Ovary (tissue), 10 donors: ENCODE measurements at regions of chr6 and their contacts with region 1.

Region 1: GRCh38 chr6:75208298-75209183 is 2.7 kb upstream of the COL12A1 start:
- DNase-seq: peak; percentile 82 to 91 (median 91)
- H3K4me3 ChIP-seq: no peak overlapping the region
- H3K27ac ChIP-seq: no peak overlapping the region
- H3K4me1 ChIP-seq: peaks cover 1% of the 10 kb centered on the region
- H3K27me3 ChIP-seq: no peaks in the 10 kb centered on the region
- CTCF ChIP-seq: peak; percentile 78 to 89 (median 83)
- EP300 ChIP-seq: no peak
- POLR2A ChIP-seq: no peak

Region 2: GRCh38 chr6:73732845-73733675 is 1475.5 kb before region 1 on chr6:
- intact Hi-C with region 1: loop called in 3 of 4 experiments (anchors 2 to 10 kb)
- DNase-seq: peak; percentile 11 to 56 (median 46)
- H3K4me3 ChIP-seq: no peak overlapping the region
- H3K27ac ChIP-seq: no peak overlapping the region
- H3K4me1 ChIP-seq: no peaks in the 10 kb centered on the region
- H3K27me3 ChIP-seq: no peaks in the 10 kb centered on the region
- CTCF ChIP-seq: peak; percentile 14 to 45 (median 29)
- EP300 ChIP-seq: no peak
- POLR2A ChIP-seq: no peak

Region 3: DNA sequence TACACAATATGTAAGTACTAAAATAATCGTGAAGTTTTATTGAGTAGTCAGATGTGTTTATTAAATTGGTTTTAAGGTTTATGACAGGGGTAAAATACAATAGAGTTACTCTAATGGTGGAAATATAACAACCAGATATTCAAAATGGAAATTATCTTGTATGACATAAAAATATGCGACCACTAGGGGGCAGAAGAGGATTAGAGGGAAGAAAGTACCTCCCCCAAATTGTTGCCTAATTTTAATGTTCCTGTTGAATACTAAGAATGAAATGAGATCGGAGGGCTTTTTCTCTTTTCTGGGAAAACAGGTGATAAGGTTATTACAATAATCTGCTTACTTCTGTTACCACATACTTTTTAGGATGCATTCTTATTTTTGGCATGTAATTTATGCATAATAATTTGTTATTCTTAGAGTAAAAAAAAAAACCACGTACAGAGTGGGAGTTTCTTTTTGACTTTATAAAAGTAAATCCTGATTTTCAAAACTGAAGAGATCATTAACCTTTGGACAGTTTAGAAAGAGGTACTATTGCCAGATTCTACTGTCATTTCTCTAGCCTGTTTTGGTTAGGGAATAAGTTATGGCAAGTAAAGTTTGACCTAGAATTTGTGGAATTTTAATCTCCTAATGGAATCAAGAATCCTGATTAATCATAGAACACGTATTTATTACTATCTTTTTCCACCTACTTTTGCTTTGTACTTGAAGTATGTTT is 1353.4 kb before region 1 on chr6:
- intact Hi-C with region 1: loop called (anchors 2 to 10 kb)
- DNase-seq: no peak
- H3K4me3 ChIP-seq: no peak overlapping the region
- H3K27ac ChIP-seq: no peak overlapping the region
- H3K4me1 ChIP-seq: no peaks in the 10 kb centered on the region
- H3K27me3 ChIP-seq: no peaks in the 10 kb centered on the region
- CTCF ChIP-seq: peak; percentile 54 to 64 (median 55)
- EP300 ChIP-seq: no peak
- POLR2A ChIP-seq: no peak

Region 4: GRCh38 chr6:74075323-74075722 is 1133.2 kb before region 1 on chr6:
- intact Hi-C with region 1: loop called in 1 of 4 experiments (anchors 5 kb)
- DNase-seq: no peak
- H3K4me3 ChIP-seq: no peak overlapping the region
- H3K27ac ChIP-seq: no peak overlapping the region
- H3K4me1 ChIP-seq: no peaks in the 10 kb centered on the region
- H3K27me3 ChIP-seq: no peaks in the 10 kb centered on the region
- CTCF ChIP-seq: no peak
- EP300 ChIP-seq: no peak
- POLR2A ChIP-seq: no peak

Region 5: DNA sequence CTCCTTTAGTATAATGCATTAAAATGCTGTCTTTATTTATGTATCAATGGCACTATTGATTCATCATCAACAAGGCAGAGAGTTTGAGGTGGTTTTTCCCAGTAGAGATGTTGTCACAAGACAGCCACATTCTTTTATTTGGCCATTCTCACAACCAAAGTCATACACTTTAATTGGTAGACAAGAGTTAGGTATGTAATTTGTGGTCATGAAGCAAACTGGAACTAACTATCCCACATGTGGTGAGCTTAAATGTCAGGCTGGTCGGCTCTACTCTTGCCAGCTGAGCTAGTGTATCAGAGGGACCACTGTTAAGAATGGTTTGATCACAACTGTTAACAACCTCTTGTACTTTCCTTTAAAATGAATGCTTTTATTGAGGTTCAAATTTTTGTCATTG is 797.9 kb before region 1 on chr6:
- intact Hi-C with region 1: loop called (anchors 5 kb)
- DNase-seq: no peak
- H3K4me3 ChIP-seq: no peak overlapping the region
- H3K27ac ChIP-seq: no peak overlapping the region
- H3K4me1 ChIP-seq: no peaks in the 10 kb centered on the region
- H3K27me3 ChIP-seq: no peaks in the 10 kb centered on the region
- CTCF ChIP-seq: no peak
- EP300 ChIP-seq: no peak
- POLR2A ChIP-seq: no peak

Region 6: DNA sequence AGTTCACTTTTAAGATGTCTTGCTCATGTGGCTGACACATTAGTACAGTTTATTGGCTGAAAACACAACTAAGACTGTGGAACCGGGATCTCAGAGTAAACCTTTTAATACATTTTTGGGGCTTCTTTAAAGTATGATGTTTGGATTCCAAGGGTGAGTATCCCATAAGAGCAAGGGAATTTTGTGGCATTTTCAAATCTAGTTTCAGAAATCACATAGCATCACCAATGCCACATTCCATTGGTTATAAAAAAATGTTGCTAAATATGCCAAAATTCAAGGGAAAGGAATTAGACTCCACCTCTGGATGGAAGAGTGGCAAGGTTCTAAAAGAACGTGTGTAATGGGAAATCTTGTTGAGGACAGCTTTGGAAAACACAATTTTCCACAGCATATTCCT is 341.2 kb before region 1 on chr6:
- intact Hi-C with region 1: loop called in 1 of 4 experiments (anchors 10 kb)
- DNase-seq: no peak
- H3K4me3 ChIP-seq: no peak overlapping the region
- H3K27ac ChIP-seq: no peak overlapping the region
- H3K4me1 ChIP-seq: peaks cover 9% of the 10 kb centered on the region
- H3K27me3 ChIP-seq: no peaks in the 10 kb centered on the region
- CTCF ChIP-seq: no peak
- EP300 ChIP-seq: no peak
- POLR2A ChIP-seq: no peak

Region 7: DNA sequence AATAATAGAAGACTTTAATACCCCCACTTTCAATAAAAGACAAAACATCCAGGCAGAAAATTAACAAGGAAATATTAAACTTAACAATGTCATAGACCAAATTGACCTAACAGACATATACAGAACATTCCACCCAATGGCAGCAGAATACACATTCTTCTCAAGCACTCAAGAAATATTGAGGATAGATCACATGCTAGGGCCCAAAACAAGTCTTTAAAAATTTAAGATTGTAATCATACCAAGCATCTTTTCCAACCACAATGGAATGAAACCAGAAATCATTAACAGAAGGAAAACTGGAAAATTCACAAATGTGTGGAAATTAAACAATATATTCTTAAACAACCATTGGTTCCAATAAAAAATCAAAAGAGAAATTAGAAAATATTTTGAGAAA is 163.7 kb before region 1 on chr6:
- intact Hi-C with region 1: no loop called
- DNase-seq: no peak
- H3K4me3 ChIP-seq: no peak overlapping the region
- H3K27ac ChIP-seq: no peak overlapping the region
- H3K4me1 ChIP-seq: no peaks in the 10 kb centered on the region
- H3K27me3 ChIP-seq: no peaks in the 10 kb centered on the region
- CTCF ChIP-seq: no peak
- EP300 ChIP-seq: no peak
- POLR2A ChIP-seq: no peak

Region 8: DNA sequence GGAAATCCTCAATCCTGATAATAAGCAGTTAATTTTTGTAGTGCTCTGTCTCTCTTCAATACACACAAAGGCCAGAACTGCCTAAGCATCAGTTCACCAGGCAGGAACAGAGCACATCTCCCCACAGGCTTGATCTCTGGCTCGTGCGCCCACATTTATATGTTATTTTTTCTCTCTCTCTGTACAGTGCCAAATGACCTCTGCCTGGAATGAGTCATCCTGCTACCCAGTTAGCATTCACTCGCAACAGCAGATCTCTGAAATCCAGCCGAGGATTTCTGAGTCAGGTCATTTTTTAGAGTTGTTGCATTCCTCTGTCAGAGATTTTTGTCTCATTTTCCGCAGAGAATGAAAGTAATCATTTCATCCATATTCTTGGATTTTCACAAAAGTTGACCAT is 109.8 kb before region 1 on chr6:
- intact Hi-C with region 1: loop called in 2 of 4 experiments (anchors 10 kb)
- DNase-seq: peak; percentile 71 to 86 (median 80)
- H3K4me3 ChIP-seq: no peak overlapping the region
- H3K27ac ChIP-seq: peak overlapping the region in 1 of 2 donors; percentile 70
- H3K4me1 ChIP-seq: peaks cover 11% of the 10 kb centered on the region
- H3K27me3 ChIP-seq: no peaks in the 10 kb centered on the region
- CTCF ChIP-seq: no peak
- EP300 ChIP-seq: no peak
- POLR2A ChIP-seq: no peak

Region 9: GRCh38 chr6:75147512-75147911 is 61.0 kb before region 1 on chr6:
- intact Hi-C with region 1: no loop called
- DNase-seq: no peak
- H3K4me3 ChIP-seq: no peak overlapping the region
- H3K27ac ChIP-seq: no peak overlapping the region
- H3K4me1 ChIP-seq: peaks cover 7% of the 10 kb centered on the region
- H3K27me3 ChIP-seq: no peaks in the 10 kb centered on the region
- CTCF ChIP-seq: no peak
- EP300 ChIP-seq: no peak
- POLR2A ChIP-seq: no peak

Region 10: GRCh38 chr6:75418233-75418632 is 209.7 kb after region 1 on chr6:
- intact Hi-C with region 1: no loop called
- DNase-seq: no peak
- H3K4me3 ChIP-seq: no peak overlapping the region
- H3K27ac ChIP-seq: no peak overlapping the region
- H3K4me1 ChIP-seq: no peaks in the 10 kb centered on the region
- H3K27me3 ChIP-seq: no peaks in the 10 kb centered on the region
- CTCF ChIP-seq: no peak
- EP300 ChIP-seq: no peak
- POLR2A ChIP-seq: no peak